Right ventricle myocardium inferior (tissue), 1 donor: ENCODE measurements at regions of chr20 and their contacts with region 1.

Region 1: GRCh38 chr20:31849455-31849925 is 4.1 kb upstream of the FOXS1 start:
- DNase-seq: no peak
- ATAC-seq: no peak

Region 2: DNA sequence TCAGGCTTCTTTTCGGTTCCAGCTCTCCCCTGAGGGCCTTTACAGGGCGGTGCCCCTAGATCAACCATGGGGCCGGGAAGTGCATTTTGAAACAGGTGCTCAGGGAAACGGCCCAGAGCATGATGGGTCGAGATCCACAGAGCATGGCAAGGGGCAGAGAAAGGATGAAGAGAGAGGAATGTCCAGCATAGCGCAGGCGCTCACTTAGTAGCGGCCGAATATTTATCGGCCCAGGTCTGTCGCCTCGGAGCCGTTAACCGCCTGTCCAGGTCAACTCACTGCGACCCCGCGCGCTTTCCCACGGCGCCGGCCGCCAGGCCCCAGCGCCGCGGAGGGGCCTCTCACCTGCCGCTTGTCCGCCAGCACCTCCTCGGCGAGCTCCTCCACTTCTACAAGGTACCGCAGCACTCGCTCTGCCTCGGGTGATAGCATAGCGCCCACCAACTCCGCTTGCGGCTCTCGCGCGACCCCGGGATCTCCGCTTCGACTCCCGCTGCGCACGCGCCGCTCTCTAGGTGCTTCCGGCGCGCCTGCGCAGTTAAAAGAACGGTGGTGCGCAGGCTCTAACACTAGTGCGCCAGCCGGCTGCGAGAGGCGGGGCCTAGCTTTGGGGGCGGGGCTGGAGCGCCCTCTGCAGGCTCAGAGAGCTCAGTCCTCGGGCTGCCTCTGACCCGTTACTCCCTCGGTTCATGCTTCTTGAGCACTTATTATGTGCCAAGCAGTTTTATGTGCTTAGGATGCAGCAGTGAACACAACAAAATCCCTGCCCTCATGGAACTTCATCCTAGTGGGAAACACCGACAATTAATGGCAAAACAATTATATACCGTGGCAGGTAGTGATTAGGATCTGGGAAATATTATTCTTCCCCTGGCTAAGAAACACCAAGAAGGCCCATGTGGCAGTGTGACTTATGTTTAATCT is 102.3 kb after region 1 on chr20 and contains the start of gene PDRG1:
- intact Hi-C with region 1: loop called (anchors 1 kb)
- DNase-seq: peak; percentile 99
- ATAC-seq: peak; percentile 98
- total RNA-seq, gene PDRG1: 11.0 TPM

Region 3: DNA sequence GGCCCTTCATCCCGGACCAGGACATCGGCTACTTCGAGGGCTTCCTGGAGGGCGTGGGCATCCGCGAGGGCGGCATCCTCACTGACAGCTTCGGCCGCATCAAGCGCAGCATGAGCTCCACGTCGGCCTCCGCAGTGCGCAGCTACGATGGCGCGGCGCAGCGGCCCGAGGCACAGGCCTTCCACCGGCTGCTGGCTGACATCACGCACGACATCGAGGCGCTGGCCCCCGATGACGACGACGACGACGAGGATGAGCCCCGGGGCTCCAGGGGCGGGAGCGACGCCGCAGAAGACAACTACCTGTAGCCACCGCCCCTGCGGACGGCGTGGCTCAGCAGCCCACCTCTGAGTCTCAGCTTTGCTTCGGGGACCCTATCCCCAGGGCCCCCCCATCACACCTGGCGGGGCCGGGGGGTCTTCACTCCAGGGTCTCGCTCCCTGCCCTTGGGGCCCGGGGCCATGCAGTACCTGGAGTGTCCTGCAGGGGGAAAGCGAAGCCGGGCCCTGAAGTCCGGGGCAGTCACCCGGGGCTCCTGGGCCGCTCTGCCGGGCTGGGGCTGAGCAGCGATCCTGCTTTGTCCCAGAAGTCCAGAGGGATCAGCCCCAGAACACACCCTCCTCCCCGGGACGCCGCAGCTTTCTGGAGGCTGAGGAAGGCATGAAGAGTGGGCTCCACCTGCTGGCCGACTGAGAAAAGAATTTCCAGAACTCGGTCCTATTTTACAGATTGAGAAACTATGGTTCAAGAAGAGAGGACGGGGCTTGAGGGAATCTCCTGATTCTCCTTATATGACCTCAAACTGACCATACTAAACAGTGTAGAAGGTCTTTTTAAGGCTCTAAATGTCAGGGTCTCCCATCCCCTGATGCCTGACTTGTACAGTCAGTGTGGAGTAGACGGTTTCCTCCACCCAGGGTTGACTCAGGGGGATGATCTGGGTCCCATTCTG is 181.8 kb after region 1 on chr20:
- intact Hi-C with region 1: loop called (anchors 1 kb)
- DNase-seq: peak; percentile 83
- ATAC-seq: peak; percentile 82

Region 4: GRCh38 chr20:32091888-32092346 is 242.4 kb after region 1 on chr20:
- intact Hi-C with region 1: loop called (anchors 5 kb)
- DNase-seq: peak; percentile 88
- ATAC-seq: peak; percentile 57